A673 (cell line): ENCODE measurements at regions of chr3 and their contacts with region 1.

Region 1: DNA sequence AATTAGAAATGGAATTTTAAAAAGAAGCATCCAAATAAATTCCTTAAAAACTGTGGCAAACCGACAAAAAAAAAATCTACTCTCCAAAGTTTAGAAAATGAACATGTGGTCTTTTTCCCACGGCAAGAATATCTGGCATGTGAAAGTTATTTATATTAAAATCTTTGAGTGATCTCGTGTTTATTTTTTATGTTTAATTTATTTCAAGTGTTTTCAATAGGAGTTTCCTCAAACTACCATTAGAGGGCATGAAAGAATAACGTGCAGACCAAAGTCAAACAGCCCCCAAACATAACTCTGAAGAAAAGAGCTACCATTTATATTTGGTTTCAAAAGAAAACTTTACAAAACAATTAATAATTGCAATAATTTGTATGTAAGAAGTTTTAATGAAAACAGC is 286.4 kb downstream of the ZIC4 start:
- DNase-seq: peak; percentile 47
- H3K4me3 ChIP-seq: no peak overlapping the region
- H3K27ac ChIP-seq: no peak overlapping the region
- H3K4me1 ChIP-seq: no peaks in the 10 kb centered on the region
- H3K27me3 ChIP-seq: no peaks in the 10 kb centered on the region
- CTCF ChIP-seq: peak; percentile 72

Region 2: DNA sequence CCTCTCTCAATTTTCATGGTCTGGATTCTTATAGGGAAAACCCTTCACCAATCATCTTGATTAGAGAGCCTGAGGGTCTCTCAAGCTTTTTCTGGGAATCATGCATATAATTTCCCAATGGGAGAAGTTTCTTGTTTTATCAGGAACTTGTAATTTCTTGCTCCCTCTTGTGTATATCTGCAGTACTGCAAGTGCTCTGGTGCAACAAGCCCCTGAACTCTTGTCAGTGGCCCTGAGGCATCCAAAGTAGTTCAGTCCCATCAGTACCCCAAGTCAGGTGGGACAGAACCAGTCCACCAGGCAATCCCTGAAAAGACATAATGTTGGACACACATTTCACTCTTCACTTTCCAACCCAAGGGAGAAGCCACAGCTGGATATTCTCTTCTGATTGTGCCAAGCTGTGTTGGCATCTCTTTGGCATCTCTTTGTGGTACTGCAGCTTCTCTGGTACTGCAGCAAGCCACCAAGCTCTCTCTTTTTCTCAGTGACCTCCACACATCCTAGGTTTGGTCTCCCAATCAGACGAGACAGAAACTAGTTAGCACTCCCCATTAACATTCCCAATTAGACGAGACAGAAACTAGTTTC is 71.9 kb after region 1 on chr3:
- CTCF ChIA-PET with region 1: interaction called, 3 read pairs
- POLR2A ChIA-PET with region 1: no interaction called
- intact Hi-C with region 1: loop called (anchors 2 kb)
- DNase-seq: peak; percentile 82
- H3K4me3 ChIP-seq: no peak overlapping the region
- H3K27ac ChIP-seq: no peak overlapping the region
- H3K4me1 ChIP-seq: peaks cover 15% of the 10 kb centered on the region
- H3K27me3 ChIP-seq: no peaks in the 10 kb centered on the region
- CTCF ChIP-seq: peak; percentile 89